ENCODE measurements at regions of chr2 and their contacts with region 1.

Region 1: GRCh38 chr2:168687314-168687713 is 115.1 kb upstream of the NOSTRIN start:
- DNase-seq: peak; percentile 53
- H3K4me3 Mint-ChIP-seq: no peak overlapping the region
- H3K27ac Mint-ChIP-seq: no peak overlapping the region
- H3K4me1 Mint-ChIP-seq: no peaks in the 10 kb centered on the region
- H3K27me3 Mint-ChIP-seq: no peaks in the 10 kb centered on the region

Region 2: DNA sequence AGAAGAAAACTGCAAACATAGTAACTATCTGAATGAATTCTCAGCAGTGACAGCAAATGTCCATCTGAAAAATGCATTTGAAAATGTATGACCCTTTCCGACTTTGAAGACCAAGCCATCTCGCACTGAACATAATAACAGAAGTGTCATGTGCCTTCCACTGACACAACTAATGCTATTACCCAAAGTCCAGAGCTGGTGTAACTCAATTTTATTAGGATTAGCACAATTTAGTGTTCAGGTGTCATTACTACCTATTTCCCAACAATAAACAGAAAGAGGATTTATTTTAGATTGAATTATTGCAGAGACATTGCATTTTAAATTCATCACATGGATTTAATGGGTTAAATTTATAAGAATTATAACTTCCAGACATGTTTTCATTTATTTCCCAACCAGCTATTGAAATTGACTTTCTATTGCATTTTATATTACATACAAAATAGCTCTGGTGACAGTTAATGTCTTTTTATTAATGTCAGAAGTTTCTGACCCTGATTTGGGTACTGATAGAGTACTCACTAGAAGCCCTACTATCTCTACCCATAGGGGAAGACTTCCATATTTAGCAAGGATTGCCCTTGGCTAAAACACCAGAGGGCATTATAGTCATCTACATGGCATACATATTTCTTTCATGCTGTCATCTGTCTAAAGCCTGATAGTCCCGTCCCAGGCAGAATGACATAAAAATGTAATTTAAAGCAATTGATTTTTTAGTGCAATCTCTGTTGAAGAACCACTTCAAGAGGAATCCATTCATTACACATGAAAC is 433.0 kb before region 1 on chr2:
- CTCF ChIA-PET with region 1: no interaction called
- intact Hi-C with region 1: loop called (anchors 10 kb)
- DNase-seq: no peak
- H3K4me3 Mint-ChIP-seq: no peak overlapping the region
- H3K27ac Mint-ChIP-seq: no peak overlapping the region
- H3K4me1 Mint-ChIP-seq: no peaks in the 10 kb centered on the region
- H3K27me3 Mint-ChIP-seq: peaks cover 3% of the 10 kb centered on the region

Region 3: GRCh38 chr2:168443818-168444217 is 243.5 kb before region 1 on chr2:
- CTCF ChIA-PET with region 1: no interaction called
- intact Hi-C with region 1: loop called (anchors 5 kb)
- DNase-seq: no peak
- H3K4me3 Mint-ChIP-seq: no peak overlapping the region
- H3K27ac Mint-ChIP-seq: no peak overlapping the region
- H3K4me1 Mint-ChIP-seq: peaks cover 24% of the 10 kb centered on the region
- H3K27me3 Mint-ChIP-seq: no peaks in the 10 kb centered on the region

Measured in activated naive CD4-positive, alpha-beta T cell treated with anti-CD3 and anti-CD28 coated beads for 36 hours (primary cell).